ENCODE measurements at regions of chr7 and their contacts with region 1.

Region 1: GRCh38 chr7:34723866-34724490 is 66.0 kb downstream of the NPSR1 start:
- DNase-seq: no peak
- ATAC-seq: no peak
- H3K4me3 ChIP-seq: peak overlapping the region in 1 of 2 donors; percentile 1
- H3K4me3 Mint-ChIP-seq: peak overlapping the region; percentile 28 to 52 (median 43)
- H3K27ac ChIP-seq: peak overlapping the region; percentile 1
- H3K27ac Mint-ChIP-seq: peak overlapping the region; percentile 47 to 80
- H3K4me1 ChIP-seq: peaks cover 0 to 5% of the 10 kb centered on the region in 2 experiments
- H3K4me1 Mint-ChIP-seq: peaks cover 25 to 29% (median 26%) of the 10 kb centered on the region in 3 donors
- H3K27me3 ChIP-seq: no peaks in the 10 kb centered on the region
- H3K27me3 Mint-ChIP-seq: no peaks in the 10 kb centered on the region

Region 2: DNA sequence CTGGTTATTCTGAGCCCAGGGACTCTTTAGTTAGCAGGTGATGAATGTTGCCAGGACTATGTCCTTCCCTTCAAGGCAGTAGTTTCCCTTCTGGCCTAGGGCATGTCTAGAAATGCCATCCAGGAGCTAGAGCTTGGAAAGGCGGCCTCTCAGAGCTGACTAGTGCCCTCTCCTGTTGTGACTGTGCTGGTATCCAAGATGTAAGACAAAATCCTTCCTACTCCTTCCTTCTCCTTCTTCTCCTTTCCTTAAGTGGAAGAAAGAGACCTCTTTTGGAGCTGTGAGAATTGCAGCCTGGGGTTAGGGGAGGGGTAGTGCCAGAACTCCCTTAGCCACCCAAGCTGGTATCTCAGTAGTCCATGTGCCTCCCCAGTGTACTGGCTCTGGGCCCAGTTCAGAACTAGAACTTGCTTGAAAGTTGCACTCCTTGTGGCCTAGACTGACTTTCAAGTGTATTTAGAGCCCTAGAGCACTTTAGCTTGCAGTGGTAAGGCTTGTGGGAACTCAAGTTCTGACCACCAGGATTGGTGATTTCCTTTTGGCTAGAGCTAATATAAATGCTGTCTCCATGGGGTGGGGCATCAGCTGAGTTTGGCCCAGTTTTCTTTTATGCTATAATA is 52.9 kb after region 1 on chr7:
- CTCF ChIA-PET with region 1: no interaction called
- POLR2A ChIA-PET with region 1: no interaction called
- DNase-seq: no peak
- ATAC-seq: no peak
- H3K4me3 ChIP-seq: no peak overlapping the region
- H3K4me3 Mint-ChIP-seq: no peak overlapping the region
- H3K27ac ChIP-seq: no peak overlapping the region
- H3K27ac Mint-ChIP-seq: no peak overlapping the region
- H3K4me1 ChIP-seq: no peaks in the 10 kb centered on the region
- H3K4me1 Mint-ChIP-seq: no peaks in the 10 kb centered on the region
- H3K27me3 ChIP-seq: peaks cover 0 to 4% of the 10 kb centered on the region in 2 experiments
- H3K27me3 Mint-ChIP-seq: peaks cover 0 to 7% of the 10 kb centered on the region in 2 donors

Region 3: DNA sequence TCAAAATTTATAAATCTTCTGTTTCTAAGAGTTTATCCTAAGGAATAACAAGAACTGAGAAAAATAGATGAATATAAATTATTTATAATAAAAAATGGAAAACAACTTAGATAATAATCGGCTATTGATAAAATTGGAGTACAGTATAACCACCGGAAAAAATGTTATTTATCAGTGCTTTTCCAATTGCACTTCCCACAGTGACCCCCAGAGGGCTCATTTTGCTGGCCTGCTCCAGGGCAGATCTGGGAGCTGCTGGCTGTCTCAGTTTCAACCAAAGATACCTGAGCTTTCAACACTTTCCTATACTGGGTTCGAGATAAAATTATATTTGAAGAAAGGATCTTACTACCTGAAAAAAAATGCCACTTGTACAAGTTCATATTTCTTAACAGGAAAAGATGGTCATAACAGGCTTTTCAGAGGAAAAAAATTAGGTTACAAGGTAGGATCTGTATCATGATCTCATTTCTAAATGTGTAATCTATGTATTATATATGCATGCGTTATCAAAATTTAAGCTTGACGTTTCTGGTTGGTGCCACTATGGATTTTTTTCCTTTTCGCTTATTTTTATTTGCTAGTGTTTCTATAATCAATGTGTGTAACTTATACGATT is 99.8 kb after region 1 on chr7:
- CTCF ChIA-PET with region 1: no interaction called
- POLR2A ChIA-PET with region 1: interaction called in 1 of 2 experiments, 10 read pairs
- DNase-seq: peak in 30 of 35 experiments; percentile 6 to 59 (median 29)
- ATAC-seq: peak in 3 of 4 experiments; percentile 35 to 66 (median 49)
- H3K4me3 ChIP-seq: no peak overlapping the region
- H3K4me3 Mint-ChIP-seq: no peak overlapping the region
- H3K27ac ChIP-seq: no peak overlapping the region
- H3K27ac Mint-ChIP-seq: no peak overlapping the region
- H3K4me1 ChIP-seq: no peaks in the 10 kb centered on the region
- H3K4me1 Mint-ChIP-seq: no peaks in the 10 kb centered on the region
- H3K27me3 ChIP-seq: peaks cover 0 to 3% of the 10 kb centered on the region in 2 experiments
- H3K27me3 Mint-ChIP-seq: peaks cover 0 to 3% of the 10 kb centered on the region in 2 donors

Measured in T-cell (primary cell).